ENCODE measurements at regions of chr18 and their contacts with region 1.

Region 1: GRCh38 chr18:49561289-49562193 is at the start of gene LIPG:
- DNase-seq: peak; percentile 57
- ATAC-seq: peak; percentile 73
- H3K4me3 ChIP-seq: peak within 1 kb of the TSS; percentile 28 to 50
- H3K27ac ChIP-seq: peak within 1 kb of the TSS; percentile 21; the same call in 1 of the 2 replicates
- H3K4me1 ChIP-seq: peaks cover 21 to 38% of the 10 kb centered on the region in 2 experiments
- H3K27me3 ChIP-seq: peaks cover 4% of the 10 kb centered on the region; the same call in 1 of the 2 replicates
- CTCF ChIP-seq: no peak
- POLR2A ChIP-seq: no peak
- RAD21 ChIP-seq: no peak
- total RNA-seq, gene LIPG: 2.6 TPM

Region 2: DNA sequence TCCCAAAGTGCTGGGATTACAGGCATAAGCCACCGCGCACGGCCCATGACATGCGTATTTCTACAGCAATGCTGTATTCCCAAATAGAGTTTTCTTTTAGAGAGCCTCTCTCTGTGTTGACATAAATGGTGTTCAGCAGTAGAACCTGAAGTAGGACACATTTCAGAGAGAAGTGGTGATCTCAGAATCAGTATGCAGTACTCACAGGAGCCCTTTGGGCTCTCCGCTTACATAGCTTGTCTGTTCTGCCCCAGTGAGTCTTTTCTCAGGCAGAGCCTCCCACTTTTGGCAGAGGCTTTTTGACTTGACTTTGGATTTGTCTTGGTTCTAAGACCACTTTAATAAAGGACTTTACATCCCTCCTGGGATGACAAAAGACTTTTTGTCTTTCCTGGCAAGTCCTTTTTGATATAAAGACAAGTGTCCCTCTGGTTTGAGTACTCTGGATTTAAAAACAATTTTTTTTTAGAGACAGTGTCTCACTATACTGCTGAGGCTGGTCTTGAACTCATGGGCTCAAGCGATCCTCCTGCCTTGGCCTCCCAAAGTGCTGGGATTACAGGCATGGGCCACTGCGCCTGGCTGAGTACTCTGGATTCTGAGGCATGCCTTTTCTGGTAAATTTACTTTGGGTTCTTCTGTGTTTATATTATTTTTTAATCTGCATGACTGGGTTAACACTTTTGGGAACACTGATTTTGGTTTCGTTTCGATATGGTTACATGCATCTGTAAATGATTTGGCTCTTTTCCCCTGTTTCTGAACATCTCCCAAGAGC is 1744.3 kb before region 1 on chr18:
- CTCF ChIA-PET with region 1: no interaction called
- POLR2A ChIA-PET with region 1: no interaction called
- RAD21 ChIA-PET with region 1: no interaction called
- intact Hi-C with region 1: no loop called
- DNase-seq: no peak
- ATAC-seq: no peak
- H3K4me3 ChIP-seq: no peak overlapping the region
- H3K27ac ChIP-seq: no peak overlapping the region
- H3K4me1 ChIP-seq: no peaks in the 10 kb centered on the region
- H3K27me3 ChIP-seq: no peaks in the 10 kb centered on the region
- CTCF ChIP-seq: no peak
- POLR2A ChIP-seq: no peak
- RAD21 ChIP-seq: no peak

Region 3: GRCh38 chr18:49304751-49305150 is 256.8 kb before region 1 on chr18:
- CTCF ChIA-PET with region 1: no interaction called
- POLR2A ChIA-PET with region 1: no interaction called
- RAD21 ChIA-PET with region 1: no interaction called
- intact Hi-C with region 1: no loop called
- DNase-seq: no peak
- ATAC-seq: no peak
- H3K4me3 ChIP-seq: no peak overlapping the region
- H3K27ac ChIP-seq: no peak overlapping the region
- H3K4me1 ChIP-seq: peaks cover 0 to 9% of the 10 kb centered on the region in 2 experiments; a peak in 1 of 4 replicates
- H3K27me3 ChIP-seq: no peaks in the 10 kb centered on the region
- CTCF ChIP-seq: no peak
- POLR2A ChIP-seq: no peak
- RAD21 ChIP-seq: no peak

Region 4: DNA sequence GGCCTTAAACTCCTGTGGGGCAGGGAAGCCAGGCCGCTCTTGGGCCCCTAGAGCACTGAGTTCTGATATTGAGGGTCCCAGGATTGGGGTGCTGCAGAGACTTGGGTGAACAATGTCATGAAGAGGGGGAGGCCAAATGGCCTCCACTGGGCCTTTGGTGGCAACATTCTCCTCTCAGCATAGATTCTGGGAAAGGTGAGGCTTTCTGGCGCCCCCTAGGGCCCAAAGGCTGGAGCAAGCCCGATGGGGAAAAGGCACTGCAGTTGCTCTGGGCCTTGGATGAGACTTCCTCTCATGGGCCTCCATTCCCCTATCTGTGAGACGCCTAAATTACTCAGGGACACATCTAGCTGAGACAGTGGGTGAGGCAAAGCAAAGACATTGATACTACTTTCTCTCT is 167.0 kb after region 1 on chr18:
- CTCF ChIA-PET with region 1: interaction called, 6 read pairs
- POLR2A ChIA-PET with region 1: no interaction called
- RAD21 ChIA-PET with region 1: interaction called in 1 of 2 experiments, 3 read pairs
- intact Hi-C with region 1: loop called (anchors 1 kb)
- DNase-seq: peak; percentile 47
- ATAC-seq: peak; percentile 52
- H3K4me3 ChIP-seq: no peak overlapping the region
- H3K27ac ChIP-seq: no peak overlapping the region; the same call in 1 of the 2 replicates
- H3K4me1 ChIP-seq: peaks cover 34 to 43% of the 10 kb centered on the region in 2 experiments
- H3K27me3 ChIP-seq: no peaks in the 10 kb centered on the region
- CTCF ChIP-seq: peak in 2 of 3 experiments; percentile 84 to 95; a peak in 4 of 6 replicates
- POLR2A ChIP-seq: no peak
- RAD21 ChIP-seq: no peak

Region 5: GRCh38 chr18:49768051-49768391 is 206.5 kb after region 1 on chr18:
- CTCF ChIA-PET with region 1: interaction called, 5 read pairs
- POLR2A ChIA-PET with region 1: no interaction called
- RAD21 ChIA-PET with region 1: no interaction called
- intact Hi-C with region 1: loop called (anchors 1 kb)
- DNase-seq: peak; percentile 62
- ATAC-seq: peak; percentile 94
- H3K4me3 ChIP-seq: no peak overlapping the region
- H3K27ac ChIP-seq: no peak overlapping the region
- H3K4me1 ChIP-seq: no peaks in the 10 kb centered on the region
- H3K27me3 ChIP-seq: no peaks in the 10 kb centered on the region
- CTCF ChIP-seq: peak; percentile 74 to 83 (median 77); a peak in 5 of 6 replicates
- POLR2A ChIP-seq: no peak
- RAD21 ChIP-seq: peak; percentile 94

Measured in HCT116 (cell line).